ENCODE measurements at regions of chr14 and their contacts with region 1.

Region 1: DNA sequence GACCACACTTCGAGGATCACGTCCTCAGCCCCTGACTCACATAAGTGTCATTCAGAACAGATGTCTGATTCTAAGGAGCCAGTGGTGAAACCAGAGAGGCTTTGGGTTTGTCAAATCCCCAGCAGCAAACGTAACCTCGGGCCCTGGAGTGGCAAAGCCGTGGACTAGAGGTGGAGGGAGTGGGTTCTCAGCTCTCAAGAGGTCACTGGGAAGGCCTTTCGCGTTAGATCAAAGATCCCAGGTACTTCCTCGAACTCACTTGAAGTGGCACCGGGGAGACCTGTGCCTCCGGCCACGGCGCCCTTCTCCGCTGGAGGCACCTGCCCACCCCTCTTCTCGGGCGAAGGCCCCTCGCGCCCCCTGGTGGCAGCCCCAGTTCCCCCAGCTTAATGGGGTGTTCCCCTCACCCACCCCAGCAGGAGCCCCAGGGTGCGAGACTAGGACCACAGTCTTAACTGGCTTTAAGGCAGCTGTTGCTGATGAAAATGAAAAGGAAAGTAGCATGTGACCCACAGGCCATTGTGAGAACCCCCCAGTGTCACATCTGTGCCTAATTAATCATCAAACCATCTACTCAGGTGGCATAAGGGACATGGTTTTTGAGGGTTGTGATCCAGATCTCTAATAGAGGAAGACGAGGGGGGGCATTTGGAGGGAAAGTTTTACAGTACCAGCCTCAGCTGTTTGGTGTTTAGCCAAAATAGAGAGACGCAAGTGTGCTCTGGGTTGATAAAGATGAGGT is 672 bp upstream of the ESR2 start:
- DNase-seq: no peak
- H3K4me3 ChIP-seq: no peak overlapping the region
- H3K27me3 ChIP-seq: peaks cover 16% of the 10 kb centered on the region
- CTCF ChIP-seq: peak; percentile 90

Region 2: GRCh38 chr14:63800651-63801375 is 494.0 kb before region 1 on chr14:
- CTCF ChIA-PET with region 1: interaction called, 21 read pairs
- POLR2A ChIA-PET with region 1: no interaction called
- DNase-seq: no peak
- H3K4me3 ChIP-seq: no peak overlapping the region
- H3K27me3 ChIP-seq: no peaks in the 10 kb centered on the region
- CTCF ChIP-seq: no peak

Measured in BJ (cell line).